PC-9 (cell line): ENCODE measurements at regions of chr11 and their contacts with region 1.

Region 1: GRCh38 chr11:22539821-22540256 is 85.8 kb downstream of the FANCF start:
- DNase-seq: no peak
- H3K4me3 ChIP-seq: no peak overlapping the region
- H3K27ac ChIP-seq: no peak overlapping the region
- H3K4me1 ChIP-seq: no peaks in the 10 kb centered on the region
- H3K27me3 ChIP-seq: no peaks in the 10 kb centered on the region
- CTCF ChIP-seq: peak; percentile 62

Region 2: DNA sequence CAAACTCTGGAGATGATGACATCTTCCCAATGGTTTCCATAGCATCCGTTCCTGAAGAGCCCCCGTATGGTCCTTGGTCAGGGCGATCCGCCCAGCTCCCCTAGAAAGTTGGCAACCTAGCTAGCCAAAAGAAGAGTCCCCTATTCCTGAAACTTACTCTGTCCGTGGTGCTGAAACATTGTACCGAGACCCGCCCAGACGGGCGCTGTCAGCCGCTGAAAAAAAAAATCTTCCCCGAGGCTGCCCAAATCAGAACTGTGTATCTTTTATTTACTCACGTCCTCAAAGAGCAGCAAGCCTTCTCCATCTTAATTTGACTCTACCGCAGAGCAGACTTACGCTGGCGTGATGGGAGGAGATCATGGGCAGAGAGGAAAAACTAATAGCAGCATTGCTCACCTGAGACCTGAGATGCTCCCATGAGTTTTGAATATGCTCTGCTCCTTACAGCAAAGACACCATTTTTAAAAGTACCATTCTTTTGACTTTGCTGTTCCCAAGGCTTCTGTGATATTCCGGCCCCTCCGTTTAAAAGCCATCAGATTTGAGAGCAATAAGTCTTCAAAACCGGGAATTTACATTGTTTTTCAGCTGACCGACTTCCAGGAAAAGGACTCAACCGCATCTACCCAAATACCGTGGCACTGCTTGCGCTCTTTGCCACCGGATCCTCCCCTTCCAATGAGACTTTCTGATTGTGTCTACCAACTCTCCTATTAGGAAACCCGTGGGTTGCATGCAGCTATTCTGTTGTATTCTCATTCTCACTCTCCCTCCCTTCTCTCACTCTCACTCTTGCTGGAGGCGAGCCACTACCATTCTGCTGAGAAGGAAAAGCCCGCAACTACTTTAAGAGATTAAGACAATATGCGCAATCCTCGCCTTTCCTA is 202.0 kb before region 1 on chr11 and contains the start of gene SLC17A6:
- CTCF ChIA-PET with region 1: interaction called, 3 read pairs
- POLR2A ChIA-PET with region 1: no interaction called
- intact Hi-C with region 1: loop called (anchors 1 kb)
- DNase-seq: no peak
- H3K4me3 ChIP-seq: no peak within 1 kb of the TSS
- H3K27ac ChIP-seq: no peak within 1 kb of the TSS
- H3K4me1 ChIP-seq: no peaks in the 10 kb centered on the region
- H3K27me3 ChIP-seq: peaks cover 35% of the 10 kb centered on the region
- CTCF ChIP-seq: no peak
- total RNA-seq, gene SLC17A6: not detected in 2 replicates